Vagina (tissue), 2 donors: ENCODE measurements at regions of chr18 and their contacts with region 1.

Region 1: DNA sequence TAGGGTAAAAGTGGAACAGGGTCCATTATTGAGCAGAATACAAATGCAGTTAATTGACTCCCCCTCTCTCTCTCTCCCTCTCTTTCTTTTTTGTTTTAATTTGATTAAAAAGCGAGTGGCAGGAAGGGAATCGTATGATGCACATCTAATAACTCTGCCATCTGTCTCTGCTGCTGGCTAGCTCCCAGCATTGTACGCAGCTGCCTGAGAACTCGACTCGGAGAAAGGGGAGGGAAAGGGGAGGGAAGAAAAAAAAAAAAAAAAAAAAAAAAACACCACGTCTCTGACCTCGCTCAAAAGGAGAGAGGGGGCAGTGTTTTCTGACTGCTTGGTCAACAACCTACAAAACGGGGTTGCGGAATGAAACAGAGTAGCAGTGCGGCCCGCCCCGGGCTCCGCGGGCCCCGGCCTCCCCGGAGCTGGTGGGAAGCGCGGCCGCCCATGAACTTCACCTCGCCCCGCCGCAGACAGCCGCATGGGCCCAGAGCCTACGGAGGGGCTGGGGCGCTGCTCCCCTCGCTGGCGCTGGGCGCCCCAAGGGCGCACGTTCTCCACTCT is 265.7 kb downstream of the TCF4 start:
- DNase-seq: no peak
- H3K4me3 ChIP-seq: peak overlapping the region; percentile 55 to 63
- H3K27ac ChIP-seq: peak overlapping the region; percentile 97
- H3K4me1 ChIP-seq: peaks cover 33% of the 10 kb centered on the region
- H3K27me3 ChIP-seq: no peaks in the 10 kb centered on the region
- CTCF ChIP-seq: no peak
- POLR2A ChIP-seq: peak in 1 of 2 donors; percentile 47

Region 2: GRCh38 chr18:54140641-54141040 is 1181.6 kb before region 1 on chr18:
- intact Hi-C with region 1: no loop called
- DNase-seq: no peak
- H3K4me3 ChIP-seq: no peak overlapping the region
- H3K27ac ChIP-seq: no peak overlapping the region
- H3K4me1 ChIP-seq: no peaks in the 10 kb centered on the region
- H3K27me3 ChIP-seq: no peaks in the 10 kb centered on the region
- CTCF ChIP-seq: no peak
- POLR2A ChIP-seq: no peak

Region 3: GRCh38 chr18:55256226-55256928 is 65.9 kb before region 1 on chr18:
- intact Hi-C with region 1: loop called (anchors 5 kb)
- DNase-seq: no peak
- H3K4me3 ChIP-seq: no peak overlapping the region
- H3K27ac ChIP-seq: no peak overlapping the region
- H3K4me1 ChIP-seq: peaks cover 16% of the 10 kb centered on the region
- H3K27me3 ChIP-seq: no peaks in the 10 kb centered on the region
- CTCF ChIP-seq: no peak
- POLR2A ChIP-seq: no peak

Region 4: GRCh38 chr18:55289775-55290174 is 32.5 kb before region 1 on chr18:
- intact Hi-C with region 1: no loop called
- DNase-seq: no peak
- H3K4me3 ChIP-seq: no peak overlapping the region
- H3K27ac ChIP-seq: no peak overlapping the region
- H3K4me1 ChIP-seq: peaks cover 21% of the 10 kb centered on the region
- H3K27me3 ChIP-seq: no peaks in the 10 kb centered on the region
- CTCF ChIP-seq: no peak
- POLR2A ChIP-seq: no peak

Region 5: DNA sequence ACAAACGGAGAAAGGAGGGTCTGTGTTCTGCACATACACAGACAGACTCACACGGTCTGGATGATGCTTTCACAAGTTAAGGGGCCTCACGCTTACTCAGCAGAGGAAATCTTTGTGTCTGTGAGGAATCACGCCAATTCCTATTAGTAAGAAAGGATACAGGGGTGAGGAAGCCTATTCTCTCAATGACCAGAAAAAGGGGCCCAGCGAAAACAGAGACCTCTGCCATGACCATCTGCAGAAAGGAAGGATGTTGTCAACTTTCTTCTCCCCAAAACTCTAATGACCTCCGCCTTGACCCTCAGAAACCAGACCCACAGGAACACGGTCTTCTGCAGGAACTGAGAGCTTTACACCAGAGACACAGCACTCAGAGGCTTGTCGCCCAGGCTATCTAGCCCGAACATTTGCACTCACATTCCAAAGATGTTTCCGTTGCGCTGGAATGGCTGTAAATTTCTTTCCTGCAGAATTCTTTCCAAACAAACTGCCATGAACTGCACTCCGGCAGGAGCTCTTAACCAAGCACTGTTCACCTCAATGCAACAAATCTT is 79.5 kb after region 1 on chr18:
- intact Hi-C with region 1: loop called (anchors 5 kb)
- DNase-seq: no peak
- H3K4me3 ChIP-seq: peak overlapping the region; percentile 28 to 33
- H3K27ac ChIP-seq: peak overlapping the region; percentile 85
- H3K4me1 ChIP-seq: peaks cover 72% of the 10 kb centered on the region
- H3K27me3 ChIP-seq: no peaks in the 10 kb centered on the region
- CTCF ChIP-seq: no peak
- POLR2A ChIP-seq: no peak

Region 6: DNA sequence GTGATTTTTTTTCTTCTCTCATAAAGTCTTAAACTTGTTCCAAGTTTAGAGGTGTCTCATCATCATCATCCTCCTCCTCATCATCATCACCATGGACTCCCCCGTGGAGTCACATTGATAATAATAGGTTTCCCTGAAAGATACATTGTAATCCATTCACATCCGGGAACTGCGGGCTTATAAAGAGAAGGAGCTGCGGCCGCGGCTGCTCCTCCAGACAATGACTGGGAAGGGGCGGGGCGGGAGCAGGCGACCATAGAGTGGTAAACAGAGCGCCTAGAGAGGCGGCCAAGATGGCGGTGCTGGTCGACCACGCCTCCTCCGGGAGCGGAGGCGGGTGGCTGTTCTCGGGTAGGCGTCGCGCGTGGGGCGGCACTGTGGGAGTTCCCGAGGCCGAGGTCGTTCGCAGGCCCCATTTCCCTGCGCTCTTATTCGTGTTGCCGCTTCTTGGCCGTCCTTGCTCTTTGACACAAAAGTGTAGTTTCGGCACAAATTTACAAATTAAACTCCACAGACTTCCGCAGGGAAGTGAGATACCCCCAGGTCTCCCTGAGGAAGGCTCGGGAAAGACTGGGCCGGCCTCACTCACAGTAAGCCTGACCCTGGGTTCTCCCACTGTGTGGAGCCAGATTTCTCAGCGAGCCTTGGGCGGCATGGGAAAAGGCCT is 267.5 kb after region 1 on chr18:
- intact Hi-C with region 1: loop called (anchors 5 kb)
- DNase-seq: peak in 1 of 2 donors; percentile 96
- H3K4me3 ChIP-seq: peak overlapping the region; percentile 72 to 77
- H3K27ac ChIP-seq: peak overlapping the region; percentile 97
- H3K4me1 ChIP-seq: peaks cover 25% of the 10 kb centered on the region
- H3K27me3 ChIP-seq: no peaks in the 10 kb centered on the region
- CTCF ChIP-seq: peak in 1 of 3 experiments; percentile 28
- POLR2A ChIP-seq: peak in 1 of 2 donors; percentile 75